Ascending aorta (tissue), 2 donors: ENCODE measurements at regions of chr2 and their contacts with region 1.

Region 1: DNA sequence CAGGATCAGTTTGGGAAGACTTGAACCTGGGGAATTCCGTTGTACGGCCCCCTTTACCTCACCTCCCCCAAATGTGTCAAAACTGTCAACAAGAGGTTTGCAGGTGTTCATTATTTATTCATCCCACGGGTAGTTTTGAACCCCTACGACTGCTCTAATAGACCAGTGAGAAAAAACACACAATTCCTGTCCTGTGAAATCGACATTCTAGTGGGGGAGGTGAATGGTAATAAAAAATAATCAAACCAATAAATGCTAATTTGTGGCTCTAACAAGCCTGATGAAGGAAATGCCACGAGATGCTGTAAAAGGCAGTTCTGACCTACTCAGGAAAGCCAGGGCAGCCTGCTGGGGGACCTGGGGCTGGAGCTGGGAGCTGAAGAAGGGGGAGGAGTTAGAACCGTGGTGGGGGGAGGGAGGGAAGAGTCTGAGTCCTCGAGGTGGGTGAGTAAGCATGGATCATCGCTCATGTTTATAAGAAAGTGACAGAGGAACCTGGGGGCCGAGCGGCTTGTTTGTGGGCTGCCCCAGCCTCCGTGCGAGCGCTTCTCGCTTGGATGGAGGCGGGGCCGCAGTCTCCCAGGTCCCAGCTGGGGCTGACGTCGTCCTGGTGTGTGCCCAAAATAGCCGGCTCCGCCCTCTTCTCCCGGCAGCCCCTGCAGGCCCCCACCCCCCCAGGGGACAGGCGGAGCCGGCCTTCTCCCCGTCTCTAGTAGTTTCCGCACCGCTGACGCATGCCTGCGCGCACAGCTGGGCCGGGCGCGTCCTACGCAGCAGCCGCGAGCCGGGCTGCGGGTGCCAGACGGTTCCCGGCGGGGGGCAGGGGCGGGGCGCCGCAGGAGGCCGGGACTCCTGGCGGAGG is at the start of gene DNAJB2:
- DNase-seq: peak; percentile 98 to 99
- H3K4me3 ChIP-seq: peak within 1 kb of the TSS; percentile 87 to 95
- H3K27ac ChIP-seq: peak within 1 kb of the TSS; percentile 99
- H3K4me1 ChIP-seq: peaks cover 11 to 39% of the 10 kb centered on the region in 2 donors
- H3K27me3 ChIP-seq: no peaks in the 10 kb centered on the region
- CTCF ChIP-seq: peak in 1 of 3 experiments; percentile 7
- total RNA-seq, gene DNAJB2: 51.0 TPM

Region 2: GRCh38 chr2:218981881-218982585 is 296.9 kb before region 1 on chr2:
- intact Hi-C with region 1: no loop called
- DNase-seq: no peak
- H3K4me3 ChIP-seq: peak overlapping the region; percentile 51 to 54
- H3K27ac ChIP-seq: no peak overlapping the region
- H3K4me1 ChIP-seq: peaks cover 16 to 38% of the 10 kb centered on the region in 2 donors
- H3K27me3 ChIP-seq: peaks cover 51% of the 10 kb centered on the region
- CTCF ChIP-seq: no peak

Region 3: GRCh38 chr2:219206442-219207253 is 72.2 kb before region 1 on chr2 and contains the start of gene ZFAND2B:
- intact Hi-C with region 1: loop called (anchors 2 kb)
- DNase-seq: peak; percentile 83 to 97
- H3K4me3 ChIP-seq: peak within 1 kb of the TSS; percentile 86 to 90
- H3K27ac ChIP-seq: peak within 1 kb of the TSS; percentile 91 to 99
- H3K4me1 ChIP-seq: peaks cover 0 to 6% of the 10 kb centered on the region in 2 donors
- H3K27me3 ChIP-seq: no peaks in the 10 kb centered on the region
- CTCF ChIP-seq: peak; percentile 9 to 34 (median 17)
- total RNA-seq, gene ZFAND2B: 225 TPM

Region 4: GRCh38 chr2:219245148-219245898 is 33.6 kb before region 1 on chr2 and contains the starts of genes GLB1L and STK16:
- intact Hi-C with region 1: loop called (anchors 1 kb)
- DNase-seq: peak; percentile 69 to 97
- H3K4me3 ChIP-seq: peak within 1 kb of the TSS; percentile 82 to 96
- H3K27ac ChIP-seq: peak within 1 kb of the TSS; percentile 96 to 99
- H3K4me1 ChIP-seq: peaks cover 20 to 40% of the 10 kb centered on the region in 2 donors
- H3K27me3 ChIP-seq: no peaks in the 10 kb centered on the region
- CTCF ChIP-seq: no peak
- total RNA-seq, gene GLB1L: 1.8 TPM
- total RNA-seq, gene STK16: 15.2 TPM

Region 5: DNA sequence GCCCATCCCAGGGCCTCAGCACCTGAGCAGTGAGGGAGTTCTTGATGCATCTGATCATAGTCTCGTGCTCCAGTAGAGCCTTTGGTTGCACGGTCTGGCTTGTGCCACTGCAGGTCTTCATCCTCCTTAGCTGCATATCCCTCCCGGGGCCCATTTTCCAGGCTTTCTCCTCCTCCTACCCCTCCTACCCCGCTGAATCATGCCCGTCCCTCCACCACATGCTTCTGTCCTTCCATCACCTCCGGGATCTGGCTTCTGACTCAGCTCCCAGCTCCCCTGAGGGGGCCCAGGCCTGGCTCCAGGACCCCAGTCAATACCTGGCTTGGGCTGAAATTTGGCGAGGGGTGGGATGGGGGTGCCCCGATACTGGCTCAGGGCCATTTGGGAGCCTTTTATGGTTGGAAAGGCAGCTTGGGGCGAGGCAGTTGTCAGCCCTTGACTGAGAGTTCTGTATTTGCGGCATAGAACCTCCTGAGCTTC is 174.0 kb after region 1 on chr2:
- intact Hi-C with region 1: loop called (anchors 5 kb)
- DNase-seq: peak; percentile 81 to 98
- H3K4me3 ChIP-seq: peak overlapping the region in 1 of 2 donors; percentile 24
- H3K27ac ChIP-seq: peak overlapping the region; percentile 91 to 94
- H3K4me1 ChIP-seq: peaks cover 53 to 79% of the 10 kb centered on the region in 2 donors
- H3K27me3 ChIP-seq: no peaks in the 10 kb centered on the region
- CTCF ChIP-seq: no peak

Region 6: GRCh38 chr2:219726916-219727315 is 448.0 kb after region 1 on chr2:
- intact Hi-C with region 1: no loop called
- DNase-seq: no peak
- H3K4me3 ChIP-seq: no peak overlapping the region
- H3K27ac ChIP-seq: no peak overlapping the region
- H3K4me1 ChIP-seq: no peaks in the 10 kb centered on the region
- H3K27me3 ChIP-seq: no peaks in the 10 kb centered on the region
- CTCF ChIP-seq: no peak